MCF 10A (cell line): ENCODE measurements at regions of chr12 and their contacts with region 1.

Region 1: DNA sequence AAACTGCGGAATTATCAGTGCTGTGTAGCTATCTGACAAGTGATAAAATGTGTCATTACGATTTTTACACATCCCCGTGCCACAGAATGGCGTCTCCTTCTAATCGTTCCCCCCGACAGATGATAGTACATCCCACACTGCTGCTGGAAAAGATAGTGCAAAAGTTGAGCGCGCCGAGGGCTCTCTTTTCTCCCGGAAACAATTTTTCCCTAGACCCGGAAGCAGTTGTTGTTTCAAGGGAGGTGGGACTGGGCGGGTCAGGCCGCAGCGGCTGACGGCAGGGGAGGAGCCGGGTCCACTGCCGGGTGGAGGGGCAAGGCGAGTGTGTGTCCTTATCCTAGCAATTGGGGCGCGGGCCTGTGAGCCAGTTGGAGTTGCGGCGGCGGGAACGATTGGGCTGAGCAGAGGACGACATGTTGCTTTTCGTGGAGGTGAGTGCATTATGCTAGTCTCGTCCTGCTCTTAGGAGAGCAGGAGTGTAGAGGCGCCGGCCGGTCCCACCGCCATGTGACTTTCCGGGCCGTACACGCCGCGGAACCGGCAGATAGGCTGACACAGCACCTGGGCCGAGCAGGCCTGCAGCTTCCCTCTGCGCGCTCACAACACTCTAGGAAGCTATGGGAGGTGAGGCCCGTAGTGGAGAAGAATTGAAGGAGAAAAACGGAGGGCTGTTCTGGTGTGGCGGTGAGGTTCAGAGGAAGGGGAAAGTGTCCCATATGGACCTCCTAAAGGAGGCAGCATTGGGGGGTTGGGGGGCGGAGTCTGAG is at the start of gene LARP4:
- DNase-seq: peak; percentile 96
- H3K4me3 Mint-ChIP-seq: peak within 1 kb of the TSS; percentile 97
- H3K27ac Mint-ChIP-seq: peak within 1 kb of the TSS; percentile 89
- H3K4me1 Mint-ChIP-seq: peaks cover 7% of the 10 kb centered on the region
- H3K27me3 Mint-ChIP-seq: no peaks in the 10 kb centered on the region
- CTCF ChIP-seq: no peak
- total RNA-seq, gene LARP4: 73.6 and 78.8 TPM in 2 replicates

Region 2: GRCh38 chr12:50111693-50112455 is 288.9 kb before region 1 on chr12 and contains the start of gene COX14:
- CTCF ChIA-PET with region 1: no interaction called
- POLR2A ChIA-PET with region 1: interaction called, 13 read pairs
- intact Hi-C with region 1: no loop called
- DNase-seq: peak; percentile 99
- H3K4me3 Mint-ChIP-seq: peak within 1 kb of the TSS; percentile 99
- H3K27ac Mint-ChIP-seq: peak within 1 kb of the TSS; percentile 93
- H3K4me1 Mint-ChIP-seq: peaks cover 12% of the 10 kb centered on the region
- H3K27me3 Mint-ChIP-seq: no peaks in the 10 kb centered on the region
- CTCF ChIP-seq: peak; percentile 80
- total RNA-seq, gene COX14: 43.6 and 45.2 TPM in 2 replicates

Region 3: GRCh38 chr12:50283229-50283923 is 117.4 kb before region 1 on chr12 and contains the start of gene LIMA1:
- CTCF ChIA-PET with region 1: no interaction called
- POLR2A ChIA-PET with region 1: interaction called, 30 read pairs
- intact Hi-C with region 1: no loop called
- DNase-seq: peak; percentile 87
- H3K4me3 Mint-ChIP-seq: peak within 1 kb of the TSS; percentile 79
- H3K27ac Mint-ChIP-seq: peak within 1 kb of the TSS; percentile 62
- H3K4me1 Mint-ChIP-seq: peaks cover 6% of the 10 kb centered on the region
- H3K27me3 Mint-ChIP-seq: no peaks in the 10 kb centered on the region
- CTCF ChIP-seq: no peak
- total RNA-seq, gene LIMA1: 65.5 and 86.0 TPM in 2 replicates

Region 4: DNA sequence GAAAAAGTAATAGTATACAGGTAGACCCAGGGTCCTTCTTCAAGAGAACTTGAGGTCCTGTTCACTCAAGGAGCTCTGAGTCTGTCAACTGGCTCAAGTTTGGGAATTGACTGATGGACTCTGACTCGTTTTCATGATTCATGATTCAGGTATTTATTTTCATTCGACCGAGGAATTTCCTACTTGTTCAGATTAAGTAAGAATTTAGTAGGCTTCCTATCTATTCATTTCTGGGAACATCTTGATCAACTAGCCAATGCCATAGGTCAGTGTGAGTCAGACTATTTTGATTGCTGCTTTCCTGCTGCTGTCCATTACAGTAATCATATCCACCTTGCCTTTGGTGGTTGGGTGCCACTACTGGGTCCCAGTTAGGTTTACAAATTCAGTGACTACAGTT is 10.5 kb before region 1 on chr12:
- CTCF ChIA-PET with region 1: interaction called, 4 read pairs
- POLR2A ChIA-PET with region 1: interaction called, 80 read pairs
- intact Hi-C with region 1: no loop called
- DNase-seq: peak; percentile 93
- H3K4me3 Mint-ChIP-seq: no peak overlapping the region
- H3K27ac Mint-ChIP-seq: peak overlapping the region; percentile 59
- H3K4me1 Mint-ChIP-seq: peaks cover 26% of the 10 kb centered on the region
- H3K27me3 Mint-ChIP-seq: no peaks in the 10 kb centered on the region
- CTCF ChIP-seq: no peak

Region 5: GRCh38 chr12:50418873-50419510 is 18.2 kb after region 1 on chr12:
- CTCF ChIA-PET with region 1: interaction called, 5 read pairs
- POLR2A ChIA-PET with region 1: interaction called, 12 read pairs
- intact Hi-C with region 1: no loop called
- DNase-seq: no peak
- H3K4me3 Mint-ChIP-seq: no peak overlapping the region
- H3K27ac Mint-ChIP-seq: peak overlapping the region; percentile 27
- H3K4me1 Mint-ChIP-seq: peaks cover 14% of the 10 kb centered on the region
- H3K27me3 Mint-ChIP-seq: no peaks in the 10 kb centered on the region
- CTCF ChIP-seq: no peak